PC-9 (cell line): ENCODE measurements at regions of chr17 and their contacts with region 1.

Region 1: DNA sequence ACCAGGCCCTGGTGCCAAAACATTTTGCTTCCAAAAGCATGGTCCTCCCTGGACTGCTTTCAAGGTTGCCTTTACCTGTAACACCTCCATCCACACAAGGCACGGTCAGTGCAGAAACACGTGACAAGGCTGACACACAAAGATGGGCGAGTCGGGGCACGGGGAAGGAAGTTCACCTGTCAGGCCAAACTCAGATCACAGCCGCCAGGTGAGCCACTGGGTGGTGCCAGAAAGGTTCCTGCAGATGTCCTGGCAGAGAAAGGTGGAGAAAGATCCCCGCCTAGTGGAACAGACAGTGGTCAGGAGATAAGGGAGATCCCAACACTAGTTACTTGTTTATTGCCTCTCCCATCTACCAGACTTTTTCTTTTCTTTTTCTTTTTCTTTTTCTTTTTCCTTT is 155.3 kb downstream of the AIPL1 start:
- DNase-seq: peak; percentile 37 to 42
- H3K4me3 ChIP-seq: no peak overlapping the region
- H3K27ac ChIP-seq: no peak overlapping the region
- H3K4me1 ChIP-seq: no peaks in the 10 kb centered on the region
- H3K27me3 ChIP-seq: peaks cover 24% of the 10 kb centered on the region
- CTCF ChIP-seq: peak; percentile 50

Region 2: DNA sequence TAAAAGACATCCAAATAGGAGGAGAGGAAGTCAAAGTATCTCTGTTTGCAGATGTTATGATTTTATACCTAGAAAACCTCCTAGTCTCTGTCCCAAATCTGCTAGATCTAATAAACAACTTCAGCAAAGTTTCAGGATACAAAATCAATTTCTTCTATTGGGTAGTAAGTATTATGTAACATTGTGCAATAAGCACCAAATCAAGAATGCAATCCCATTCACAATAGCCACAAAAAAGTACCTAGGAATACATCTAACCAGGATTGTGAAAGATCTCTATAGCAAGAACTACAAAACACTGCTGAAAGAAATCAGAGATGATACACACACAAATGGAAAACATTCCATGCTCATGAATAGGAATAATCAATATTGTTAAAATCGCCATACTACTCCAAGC is 708.4 kb before region 1 on chr17:
- CTCF ChIA-PET with region 1: no interaction called
- POLR2A ChIA-PET with region 1: no interaction called
- intact Hi-C with region 1: loop called (anchors 5 kb)
- DNase-seq: no peak
- H3K4me3 ChIP-seq: no peak overlapping the region
- H3K27ac ChIP-seq: no peak overlapping the region
- H3K4me1 ChIP-seq: no peaks in the 10 kb centered on the region
- H3K27me3 ChIP-seq: no peaks in the 10 kb centered on the region
- CTCF ChIP-seq: no peak